Psoas muscle (tissue), 8 donors: ENCODE measurements at regions of chr5 and their contacts with region 1.

Region 1: DNA sequence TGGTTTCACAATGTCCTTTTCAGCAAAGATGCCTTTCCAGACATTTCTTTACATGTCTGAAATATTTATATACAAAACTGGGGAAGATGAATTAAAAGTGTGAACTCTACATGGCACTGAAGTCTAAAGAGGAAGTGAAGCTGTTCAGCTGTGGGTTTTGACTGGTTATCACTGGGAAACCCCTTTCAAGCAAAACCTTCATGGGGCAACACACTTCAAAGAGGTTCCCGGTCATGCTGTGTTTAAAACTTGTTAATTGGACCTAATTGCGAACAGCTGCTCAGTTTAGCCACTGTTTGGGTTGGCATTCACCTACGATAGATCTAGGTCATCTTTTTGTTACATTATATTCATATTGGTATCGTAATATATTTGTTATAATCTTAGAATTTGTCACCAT is 20.0 kb upstream of the GDNF start:
- DNase-seq: no peak
- ATAC-seq: no peak
- H3K4me3 ChIP-seq: no peak overlapping the region
- H3K27ac ChIP-seq: no peak overlapping the region
- H3K4me1 ChIP-seq: no peaks in the 10 kb centered on the region
- H3K27me3 ChIP-seq: no peaks in the 10 kb centered on the region
- CTCF ChIP-seq: no peak

Region 2: DNA sequence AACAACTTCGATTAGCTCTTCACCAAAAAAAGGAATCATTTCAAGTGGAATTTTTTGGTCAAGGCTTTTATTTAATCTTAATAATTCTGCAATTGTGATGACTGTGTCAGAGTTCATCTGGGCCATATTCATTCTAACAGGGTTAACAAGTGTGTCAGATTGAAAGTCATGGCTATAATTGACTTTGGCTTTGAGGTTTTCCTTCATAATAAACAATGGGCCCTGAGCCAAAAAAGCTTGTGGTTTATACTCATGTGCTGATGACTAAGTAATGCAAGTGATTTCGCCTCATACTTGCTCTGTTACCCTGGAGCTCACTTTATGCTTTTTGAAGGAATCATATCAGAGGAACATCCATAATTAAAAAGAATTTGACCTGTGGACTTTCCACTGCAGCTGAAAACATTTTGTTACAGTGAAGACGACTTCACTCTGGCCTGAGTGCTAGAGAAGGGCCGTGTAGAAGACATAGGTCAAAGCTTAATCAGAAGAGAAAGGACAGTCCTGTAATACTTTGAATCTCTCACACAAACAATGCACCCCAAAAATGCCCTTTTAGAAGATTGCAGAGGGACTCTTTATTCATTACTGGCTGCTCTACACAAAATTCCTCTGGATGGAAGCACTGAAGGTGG is 121.6 kb before region 1 on chr5:
- intact Hi-C with region 1: no loop called
- DNase-seq: no peak
- ATAC-seq: peak; percentile 48 to 63 (median 58)
- H3K4me3 ChIP-seq: peak overlapping the region; percentile 37
- H3K27ac ChIP-seq: peak overlapping the region; percentile 86
- H3K4me1 ChIP-seq: peaks cover 49% of the 10 kb centered on the region
- H3K27me3 ChIP-seq: no peaks in the 10 kb centered on the region
- CTCF ChIP-seq: no peak

Region 3: DNA sequence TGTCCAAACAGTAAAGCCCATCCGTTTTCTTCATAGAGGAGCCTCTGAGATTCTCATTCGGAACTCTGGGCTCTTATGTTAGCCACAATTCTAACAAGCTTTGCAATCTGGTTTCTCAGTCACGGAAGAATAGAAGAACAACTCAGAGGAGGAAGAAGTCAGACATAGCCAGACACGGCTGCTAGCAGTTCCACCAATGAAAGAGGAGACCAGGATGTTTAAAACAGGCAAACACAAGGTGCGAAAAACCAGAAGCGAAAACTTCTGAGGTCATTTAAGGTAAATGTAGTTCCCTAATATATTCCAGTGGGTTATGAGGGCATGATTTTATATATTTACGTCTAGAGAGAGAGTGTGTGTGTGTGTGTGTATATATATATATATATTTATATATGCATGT is 14.2 kb after region 1 on chr5:
- intact Hi-C with region 1: loop called in 1 of 2 experiments (anchors 1 kb)
- DNase-seq: no peak
- ATAC-seq: no peak
- H3K4me3 ChIP-seq: no peak overlapping the region
- H3K27ac ChIP-seq: no peak overlapping the region
- H3K4me1 ChIP-seq: no peaks in the 10 kb centered on the region
- H3K27me3 ChIP-seq: no peaks in the 10 kb centered on the region
- CTCF ChIP-seq: no peak

Region 4: DNA sequence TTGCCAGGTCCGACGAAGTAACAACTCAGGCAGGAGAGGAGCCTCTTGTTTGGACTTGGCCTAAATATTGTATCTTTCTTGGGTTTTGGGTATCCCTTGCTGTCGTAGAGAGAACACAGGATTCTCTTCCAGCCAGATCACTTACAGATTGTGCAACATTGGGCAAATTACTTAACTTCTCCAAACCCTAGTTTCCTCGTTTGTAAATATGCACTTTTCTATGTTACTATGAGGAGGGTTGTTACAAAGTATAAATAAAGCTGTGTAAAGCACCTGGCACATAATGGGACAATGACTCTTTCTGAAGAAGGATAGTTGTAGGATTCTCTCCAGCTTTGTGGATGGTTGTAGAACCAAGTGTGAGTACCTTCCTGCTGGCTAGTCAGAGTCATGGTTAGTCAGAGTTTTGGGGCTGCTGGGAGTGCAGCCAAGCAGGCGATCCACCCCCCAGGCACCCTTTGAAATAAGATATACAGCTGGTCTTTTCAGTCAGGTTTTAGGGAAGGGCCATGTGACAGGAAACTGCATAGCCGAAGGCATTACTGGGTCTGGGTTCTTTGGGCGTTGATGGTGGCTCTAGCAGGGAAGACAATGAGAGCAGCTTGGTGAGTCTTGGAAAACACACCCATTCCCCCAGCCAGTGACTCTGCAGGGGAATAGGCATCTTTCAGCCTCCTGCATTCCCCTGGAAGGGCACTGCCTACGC is 30.0 kb after region 1 on chr5:
- intact Hi-C with region 1: loop called in 1 of 2 experiments (anchors 2 kb)
- DNase-seq: no peak
- ATAC-seq: peak in 1 of 4 donors; percentile 26
- H3K4me3 ChIP-seq: no peak overlapping the region
- H3K27ac ChIP-seq: no peak overlapping the region
- H3K4me1 ChIP-seq: peaks cover 18% of the 10 kb centered on the region
- H3K27me3 ChIP-seq: no peaks in the 10 kb centered on the region
- CTCF ChIP-seq: no peak